ENCODE measurements at regions of chr4 and their contacts with region 1.

Region 1: GRCh38 chr4:151099229-151099975 is at the start of gene RPS3A:
- DNase-seq: peak; percentile 93 to 96
- ATAC-seq: peak; percentile 97 to 98
- H3K4me3 ChIP-seq: peak within 1 kb of the TSS; percentile 77 to 89 (median 81)
- H3K27ac ChIP-seq: peak within 1 kb of the TSS; percentile 89 to 91 (median 89)
- H3K4me1 ChIP-seq: peaks cover 16 to 18% of the 10 kb centered on the region in 2 donors
- H3K27me3 ChIP-seq: no peaks in the 10 kb centered on the region
- CTCF ChIP-seq: peak; percentile 55 to 87 (median 75)
- POLR2A ChIP-seq: peak; percentile 80
- total RNA-seq, gene RPS3A: 1,618 to 1,974 (median 1,771) TPM

Region 2: DNA sequence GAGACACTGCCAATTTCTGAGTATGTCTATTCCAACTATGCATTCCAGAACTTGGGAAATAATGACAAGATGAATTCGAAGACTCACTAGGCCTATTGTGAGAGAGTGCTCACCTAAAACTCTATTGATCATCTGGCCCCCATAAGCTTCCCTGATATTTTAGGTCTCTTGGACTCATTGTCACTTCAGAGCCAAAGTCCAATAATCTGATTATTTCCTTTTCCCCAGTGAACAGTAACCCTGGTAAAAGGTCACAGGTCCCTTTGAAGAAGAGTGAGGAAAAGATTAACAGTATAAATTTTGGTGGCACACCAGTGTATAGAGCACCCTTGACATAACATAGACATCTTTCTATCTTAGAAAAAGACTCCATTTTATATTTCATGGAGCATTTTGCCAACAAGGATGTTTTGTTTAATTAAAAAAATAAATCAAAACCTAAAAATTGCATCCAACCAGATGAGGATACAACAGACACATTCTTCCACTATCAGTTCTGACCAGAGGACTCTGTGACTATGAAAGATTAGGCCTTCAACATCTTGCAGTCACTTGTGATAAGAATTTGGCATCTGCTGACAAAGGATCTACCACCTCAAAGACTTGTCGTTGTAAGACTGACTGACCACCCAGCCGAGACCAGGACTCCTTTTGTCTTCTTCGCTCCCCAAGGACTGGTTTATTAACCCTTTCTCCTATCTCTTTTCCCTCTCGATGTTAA is 325.5 kb before region 1 on chr4:
- in situ Hi-C with region 1: no loop called
- intact Hi-C with region 1: no loop called
- DNase-seq: no peak
- ATAC-seq: no peak
- H3K4me3 ChIP-seq: no peak overlapping the region
- H3K27ac ChIP-seq: no peak overlapping the region
- H3K4me1 ChIP-seq: no peaks in the 10 kb centered on the region
- H3K27me3 ChIP-seq: no peaks in the 10 kb centered on the region
- CTCF ChIP-seq: no peak
- POLR2A ChIP-seq: no peak

Region 3: GRCh38 chr4:151015459-151016347 is 83.7 kb before region 1 on chr4:
- in situ Hi-C with region 1: no loop called
- intact Hi-C with region 1: loop called (anchors 1 kb)
- DNase-seq: peak; percentile 27 to 62
- ATAC-seq: peak; percentile 85 to 86
- H3K4me3 ChIP-seq: peak overlapping the region; percentile 81 to 97 (median 93)
- H3K27ac ChIP-seq: peak overlapping the region; percentile 83 to 89 (median 86)
- H3K4me1 ChIP-seq: peaks cover 18% of the 10 kb centered on the region in 2 donors
- H3K27me3 ChIP-seq: no peaks in the 10 kb centered on the region
- CTCF ChIP-seq: no peak
- POLR2A ChIP-seq: peak; percentile 58 to 59

Region 4: DNA sequence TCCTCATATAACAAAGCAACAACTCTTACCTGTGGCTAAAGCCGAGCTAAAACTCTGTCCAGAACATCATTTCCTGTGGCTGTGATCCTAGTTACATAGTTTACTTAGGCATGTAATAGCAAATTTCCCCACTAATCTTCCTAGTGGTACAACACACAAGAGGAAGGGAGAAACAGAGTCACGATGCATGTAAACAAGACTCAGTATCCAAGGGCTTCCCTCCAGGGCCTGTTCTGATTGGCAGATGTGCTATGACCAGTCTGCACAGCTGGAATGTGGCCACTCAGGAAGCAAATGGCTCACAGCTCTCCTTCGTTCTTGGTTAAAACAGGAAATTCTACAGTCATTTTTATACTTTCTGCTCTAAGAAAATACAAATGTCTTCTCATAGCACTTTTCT is 128.3 kb after region 1 on chr4:
- in situ Hi-C with region 1: no loop called
- intact Hi-C with region 1: no loop called
- DNase-seq: peak; percentile 50 to 63
- ATAC-seq: peak; percentile 64 to 69
- H3K4me3 ChIP-seq: peak overlapping the region; percentile 1 to 31 (median 13)
- H3K27ac ChIP-seq: peak overlapping the region; percentile 50 to 59 (median 54)
- H3K4me1 ChIP-seq: peaks cover 0 to 24% of the 10 kb centered on the region in 2 donors
- H3K27me3 ChIP-seq: no peaks in the 10 kb centered on the region
- CTCF ChIP-seq: no peak
- POLR2A ChIP-seq: peak in 1 of 2 donors; percentile 14

Region 5: GRCh38 chr4:151276787-151277562 is 177.6 kb after region 1 on chr4 and contains the start of gene PRSS48:
- in situ Hi-C with region 1: no loop called
- intact Hi-C with region 1: no loop called
- DNase-seq: peak; percentile 14 to 48
- ATAC-seq: peak; percentile 81 to 94
- H3K4me3 ChIP-seq: no peak within 1 kb of the TSS
- H3K27ac ChIP-seq: no peak within 1 kb of the TSS
- H3K4me1 ChIP-seq: peaks cover 0 to 11% of the 10 kb centered on the region in 2 donors
- H3K27me3 ChIP-seq: no peaks in the 10 kb centered on the region
- CTCF ChIP-seq: peak; percentile 53 to 76 (median 70)
- POLR2A ChIP-seq: no peak
- total RNA-seq, gene PRSS48: not detected

Region 6: DNA sequence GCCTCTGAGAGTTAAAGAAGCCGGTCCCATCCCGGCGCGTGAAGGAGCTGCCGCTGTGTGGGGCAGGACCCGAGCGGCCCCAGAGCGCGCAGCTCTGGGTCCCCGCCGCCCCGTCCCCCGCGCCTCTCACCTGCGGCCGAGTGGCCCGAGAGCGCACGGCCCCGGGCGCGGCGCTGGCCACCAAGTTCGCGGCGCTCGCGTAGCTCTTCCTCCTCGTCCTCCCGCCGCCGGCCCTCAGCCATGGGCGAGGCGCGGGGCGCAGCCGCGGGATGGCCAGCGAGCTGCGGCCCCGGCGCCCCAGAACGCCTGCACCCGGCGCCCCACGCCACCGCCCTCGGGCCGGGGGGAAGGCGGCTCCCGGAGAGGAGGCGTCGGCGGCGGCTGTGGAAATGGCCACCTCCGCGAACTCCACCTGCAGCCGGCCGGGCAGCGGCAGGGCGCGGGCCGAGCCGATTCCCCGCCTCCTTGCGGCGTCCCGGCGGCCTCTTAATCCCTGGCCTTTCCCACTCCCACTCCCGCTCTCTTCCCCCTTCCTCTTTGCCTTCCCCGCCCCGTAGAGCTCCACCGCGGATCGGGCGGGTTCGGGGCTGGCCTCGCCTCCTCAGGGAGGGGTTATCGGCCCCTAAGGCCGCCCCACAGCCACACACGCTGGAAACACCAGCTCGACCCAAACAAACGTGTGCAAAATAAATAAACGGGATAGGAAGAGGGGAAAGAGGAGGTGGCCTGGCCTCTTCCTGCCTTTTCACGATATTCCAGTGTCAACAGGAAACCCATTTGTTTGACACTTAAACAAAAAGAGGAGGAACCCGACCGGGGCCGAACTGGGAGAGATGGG is 225.9 kb after region 1 on chr4 and contains the start of gene SH3D19:
- in situ Hi-C with region 1: no loop called
- intact Hi-C with region 1: loop called (anchors 1 kb)
- DNase-seq: peak; percentile 40 to 51
- ATAC-seq: peak; percentile 68 to 69
- H3K4me3 ChIP-seq: peak within 1 kb of the TSS; percentile 72 to 96 (median 76)
- H3K27ac ChIP-seq: peak within 1 kb of the TSS; percentile 84 to 94 (median 86)
- H3K4me1 ChIP-seq: peaks cover 25 to 34% of the 10 kb centered on the region in 2 donors
- H3K27me3 ChIP-seq: no peaks in the 10 kb centered on the region
- CTCF ChIP-seq: peak in 1 of 5 experiments; percentile 23
- POLR2A ChIP-seq: peak; percentile 38 to 54
- total RNA-seq, gene SH3D19: 35.6 to 73.1 (median 50.5) TPM

Region 7: DNA sequence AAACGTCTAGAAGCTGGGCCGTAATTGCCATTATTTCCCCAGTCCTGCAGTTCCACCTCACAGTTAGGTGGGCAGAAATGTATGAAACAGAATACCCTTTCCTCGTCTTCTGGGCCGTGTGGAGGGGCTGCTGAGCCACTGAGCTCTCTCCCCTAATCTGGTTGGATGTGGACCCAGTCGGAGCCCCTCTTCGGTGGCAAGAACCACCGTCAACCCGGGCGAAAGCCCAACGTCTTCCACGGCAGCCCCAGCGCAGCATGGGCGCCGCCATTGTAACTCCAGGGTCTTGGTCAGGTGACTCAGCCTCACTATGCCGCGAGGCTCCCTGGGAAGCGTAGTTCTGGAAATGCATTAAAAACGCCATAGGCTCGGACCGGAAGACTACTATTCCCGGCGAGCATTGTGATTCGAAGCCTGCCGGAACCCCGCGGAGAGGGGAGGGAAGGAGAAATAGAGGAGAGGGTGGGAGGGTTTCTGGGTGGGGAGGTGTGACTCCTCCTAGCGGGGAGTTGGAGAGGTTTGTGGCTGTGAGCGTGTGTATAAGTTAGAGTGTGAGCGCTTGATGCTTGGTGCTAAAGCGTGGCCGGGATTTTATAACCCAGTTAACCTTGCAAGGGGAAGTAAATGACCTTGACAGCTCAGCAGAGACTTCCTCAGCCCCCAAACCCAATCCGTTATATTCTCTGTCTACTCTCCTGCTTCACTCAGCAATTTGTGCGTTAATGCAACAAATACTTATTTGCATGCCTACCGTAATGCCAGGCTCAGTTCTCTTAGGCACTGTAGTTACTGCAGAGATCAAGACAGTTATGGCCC is 661.5 kb after region 1 on chr4 and contains the start of gene GATB:
- in situ Hi-C with region 1: loop called in 2 of 4 experiments (anchors 25 kb)
- intact Hi-C with region 1: loop called (anchors 1 kb)
- DNase-seq: peak; percentile 91 to 92
- ATAC-seq: peak; percentile 100
- H3K4me3 ChIP-seq: peak within 1 kb of the TSS; percentile 83 to 95 (median 92)
- H3K27ac ChIP-seq: peak within 1 kb of the TSS; percentile 72 to 88 (median 81)
- H3K4me1 ChIP-seq: peaks cover 7 to 11% of the 10 kb centered on the region in 2 donors
- H3K27me3 ChIP-seq: no peaks in the 10 kb centered on the region
- CTCF ChIP-seq: peak in 3 of 5 experiments; percentile 38 to 63 (median 52)
- POLR2A ChIP-seq: peak; percentile 48 to 55
- total RNA-seq, gene GATB: 18.7 to 34.0 (median 27.6) TPM